T-cell (primary cell): ENCODE measurements at regions of chr5 and their contacts with region 1.

Region 1: GRCh38 chr5:35664584-35664983 is 46.9 kb downstream of the SPEF2 start:
- DNase-seq: no peak
- ATAC-seq: no peak
- H3K4me3 ChIP-seq: no peak overlapping the region
- H3K4me3 Mint-ChIP-seq: peak overlapping the region in 1 of 3 donors; percentile 21
- H3K27ac ChIP-seq: no peak overlapping the region
- H3K27ac Mint-ChIP-seq: no peak overlapping the region
- H3K4me1 ChIP-seq: peaks cover 3 to 23% of the 10 kb centered on the region in 2 experiments
- H3K4me1 Mint-ChIP-seq: peaks cover 38 to 47% (median 45%) of the 10 kb centered on the region in 3 donors
- H3K27me3 ChIP-seq: no peaks in the 10 kb centered on the region
- H3K27me3 Mint-ChIP-seq: no peaks in the 10 kb centered on the region

Region 2: GRCh38 chr5:35679357-35679756 is 14.8 kb after region 1 on chr5:
- CTCF ChIA-PET with region 1: interaction called in 1 of 2 experiments, 11 read pairs
- POLR2A ChIA-PET with region 1: no interaction called
- DNase-seq: no peak
- ATAC-seq: peak in 1 of 4 experiments; percentile 42
- H3K4me3 ChIP-seq: no peak overlapping the region
- H3K4me3 Mint-ChIP-seq: no peak overlapping the region
- H3K27ac ChIP-seq: no peak overlapping the region
- H3K27ac Mint-ChIP-seq: peak overlapping the region; percentile 56 to 83
- H3K4me1 ChIP-seq: peaks cover 7 to 13% of the 10 kb centered on the region in 2 experiments
- H3K4me1 Mint-ChIP-seq: peaks cover 17 to 36% (median 20%) of the 10 kb centered on the region in 3 donors
- H3K27me3 ChIP-seq: no peaks in the 10 kb centered on the region
- H3K27me3 Mint-ChIP-seq: no peaks in the 10 kb centered on the region